ENCODE measurements at regions of chr7 and their contacts with region 1.

Region 1: DNA sequence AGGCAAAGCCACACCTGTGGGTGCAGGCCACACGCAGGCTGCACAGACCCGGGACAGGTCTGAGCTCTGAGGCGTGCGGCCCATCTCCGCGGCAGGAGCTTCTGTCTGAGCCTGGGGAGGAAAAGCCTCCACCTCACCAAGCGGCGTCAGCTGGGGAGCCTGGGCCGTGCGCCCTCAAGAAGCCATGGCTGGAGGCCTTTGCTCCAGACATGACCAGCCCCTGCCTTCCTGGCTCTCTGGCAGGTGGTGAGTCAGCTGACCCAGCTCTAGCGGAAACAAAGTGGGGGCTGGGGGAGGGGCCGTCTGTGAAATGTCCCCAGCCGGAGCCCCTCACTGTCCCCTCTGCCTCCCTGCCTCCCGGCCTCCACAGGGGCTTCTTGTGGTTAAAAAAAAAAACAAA is 12.5 kb downstream of the GPER1 start:
- DNase-seq: no peak
- H3K4me3 ChIP-seq: no peak overlapping the region
- H3K27ac ChIP-seq: no peak overlapping the region
- H3K4me1 ChIP-seq: no peaks in the 10 kb centered on the region
- H3K27me3 ChIP-seq: no peaks in the 10 kb centered on the region
- CTCF ChIP-seq: no peak

Region 2: GRCh38 chr7:713488-714230 is 386.7 kb before region 1 on chr7:
- CTCF ChIA-PET with region 1: interaction called, 10 read pairs
- POLR2A ChIA-PET with region 1: no interaction called
- intact Hi-C with region 1: no loop called
- DNase-seq: no peak
- H3K4me3 ChIP-seq: no peak overlapping the region
- H3K27ac ChIP-seq: no peak overlapping the region
- H3K4me1 ChIP-seq: no peaks in the 10 kb centered on the region
- H3K27me3 ChIP-seq: no peaks in the 10 kb centered on the region
- CTCF ChIP-seq: no peak